ENCODE measurements at regions of chr19 and their contacts with region 1.

Region 1: DNA sequence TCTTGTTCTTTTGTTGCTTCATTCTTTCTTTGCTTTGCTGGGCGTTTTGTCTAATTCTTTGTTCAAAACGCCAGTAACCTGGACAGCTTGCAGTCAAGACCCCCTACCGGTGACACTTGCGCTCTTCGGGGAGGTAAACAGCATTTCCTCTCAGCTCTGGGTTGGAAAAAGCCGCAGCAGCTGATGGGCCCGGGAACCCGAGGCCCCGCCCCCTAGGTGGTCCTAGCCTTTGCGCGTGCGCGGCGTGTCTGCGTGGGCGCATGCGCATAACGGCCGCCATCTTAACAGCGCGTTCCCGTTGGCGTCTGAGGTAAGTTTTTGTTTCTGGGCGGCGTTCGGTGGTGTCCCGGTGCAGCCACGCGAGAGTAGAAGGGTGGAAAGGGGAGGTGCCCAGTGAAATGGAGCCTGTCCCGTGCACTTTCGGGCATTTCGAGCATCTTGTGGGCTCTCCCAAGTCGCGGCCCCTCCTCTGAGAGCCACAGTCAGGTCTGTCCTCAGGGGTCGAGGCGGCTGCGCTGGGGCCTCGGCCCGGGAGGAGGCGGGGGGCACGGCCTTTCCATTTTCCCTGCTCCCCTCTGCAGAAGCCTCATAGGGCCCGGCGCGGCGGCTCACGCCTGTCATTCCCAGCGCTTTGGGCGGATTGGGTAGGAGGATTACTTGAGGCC is at the start of gene ZNF559:
- DNase-seq: peak; percentile 97
- H3K4me3 Mint-ChIP-seq: peak within 1 kb of the TSS; percentile 89
- H3K27ac Mint-ChIP-seq: peak within 1 kb of the TSS; percentile 96
- H3K4me1 Mint-ChIP-seq: peaks cover 27% of the 10 kb centered on the region
- H3K27me3 Mint-ChIP-seq: no peaks in the 10 kb centered on the region
- total RNA-seq, gene ZNF559: 15.6 to 18.5 TPM

Region 2: DNA sequence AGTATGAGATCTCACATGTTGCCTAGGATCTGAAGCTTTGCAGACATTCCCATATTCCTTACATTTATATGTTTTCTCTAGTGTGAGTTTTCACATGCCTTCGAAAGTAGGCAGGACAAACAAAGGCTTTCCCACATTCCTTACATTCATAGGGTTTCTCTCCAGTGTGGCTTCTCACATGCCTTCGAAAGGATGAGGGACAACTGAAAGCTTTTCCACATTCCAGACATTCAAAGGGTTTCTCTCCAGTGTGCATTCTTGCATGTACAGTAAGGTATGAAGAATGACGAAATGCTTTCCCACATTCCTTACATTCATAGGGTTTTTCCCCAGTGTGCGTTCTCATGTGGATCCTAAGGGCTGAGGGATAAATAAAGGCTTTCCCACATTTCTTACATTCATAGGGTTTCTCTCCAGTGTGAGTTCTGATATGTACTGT is 28.6 kb before region 1 on chr19:
- CTCF ChIA-PET with region 1: no interaction called
- POLR2A ChIA-PET with region 1: no interaction called
- DNase-seq: no peak
- H3K4me3 Mint-ChIP-seq: no peak overlapping the region
- H3K27ac Mint-ChIP-seq: no peak overlapping the region
- H3K4me1 Mint-ChIP-seq: no peaks in the 10 kb centered on the region
- H3K27me3 Mint-ChIP-seq: no peaks in the 10 kb centered on the region

Region 3: GRCh38 chr19:9309139-9309973 is 14.7 kb before region 1 on chr19 and contains the start of gene ZNF699:
- CTCF ChIA-PET with region 1: interaction called, 4 read pairs
- POLR2A ChIA-PET with region 1: interaction called, 15 read pairs
- DNase-seq: peak; percentile 99
- H3K4me3 Mint-ChIP-seq: peak within 1 kb of the TSS; percentile 83
- H3K27ac Mint-ChIP-seq: peak within 1 kb of the TSS; percentile 92
- H3K4me1 Mint-ChIP-seq: peaks cover 21% of the 10 kb centered on the region
- H3K27me3 Mint-ChIP-seq: no peaks in the 10 kb centered on the region
- total RNA-seq, gene ZNF699: 10.7 to 11.7 TPM

Region 4: DNA sequence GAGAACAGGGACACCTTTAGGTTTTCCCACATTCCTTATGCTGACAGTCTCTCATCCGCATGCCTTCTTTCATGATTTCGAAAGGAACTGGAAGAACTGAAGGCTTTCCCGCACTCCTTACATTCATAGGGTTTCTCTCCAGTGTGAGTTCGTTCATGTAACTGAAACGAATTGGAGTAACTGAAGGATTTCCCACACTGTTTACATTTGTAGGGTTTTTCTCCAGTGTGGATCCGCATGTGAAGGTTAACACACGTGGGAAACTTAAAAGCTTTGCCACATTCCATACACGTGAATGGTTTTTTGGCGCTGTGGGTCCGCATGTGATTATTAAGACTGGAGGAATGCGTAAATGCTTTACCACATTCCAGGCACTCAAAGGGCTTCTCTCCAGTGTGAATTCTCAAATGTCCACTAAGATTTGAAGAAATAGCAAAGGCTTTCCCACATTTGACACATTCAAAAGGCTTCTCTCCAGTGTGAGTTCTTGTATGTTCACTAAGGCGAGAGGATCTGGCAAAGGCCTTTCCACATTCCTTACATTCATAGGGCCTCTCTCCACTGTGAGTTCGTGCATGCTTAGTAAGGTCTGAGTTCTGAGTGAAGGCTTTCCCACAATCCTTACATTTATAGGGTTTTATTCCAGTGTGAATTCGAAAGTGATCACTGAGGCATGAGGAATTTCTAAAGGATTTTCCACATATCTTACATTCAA is 89.3 kb after region 1 on chr19:
- CTCF ChIA-PET with region 1: no interaction called
- POLR2A ChIA-PET with region 1: no interaction called
- DNase-seq: no peak
- H3K4me3 Mint-ChIP-seq: no peak overlapping the region
- H3K27ac Mint-ChIP-seq: no peak overlapping the region
- H3K4me1 Mint-ChIP-seq: no peaks in the 10 kb centered on the region
- H3K27me3 Mint-ChIP-seq: no peaks in the 10 kb centered on the region

Measured in activated CD4-positive, alpha-beta memory T cell treated with anti-CD3 and anti-CD28 coated beads, Interleukin-2, amount 10 ng/mL, durations not matched to agents 7 days and 5 days (primary cell).